Activated CD8-positive, alpha-beta T cell treated with anti-CD3 and anti-CD28 coated beads for 36 hours (primary cell): ENCODE measurements at regions of chr6 and their contacts with region 1.

Region 1: DNA sequence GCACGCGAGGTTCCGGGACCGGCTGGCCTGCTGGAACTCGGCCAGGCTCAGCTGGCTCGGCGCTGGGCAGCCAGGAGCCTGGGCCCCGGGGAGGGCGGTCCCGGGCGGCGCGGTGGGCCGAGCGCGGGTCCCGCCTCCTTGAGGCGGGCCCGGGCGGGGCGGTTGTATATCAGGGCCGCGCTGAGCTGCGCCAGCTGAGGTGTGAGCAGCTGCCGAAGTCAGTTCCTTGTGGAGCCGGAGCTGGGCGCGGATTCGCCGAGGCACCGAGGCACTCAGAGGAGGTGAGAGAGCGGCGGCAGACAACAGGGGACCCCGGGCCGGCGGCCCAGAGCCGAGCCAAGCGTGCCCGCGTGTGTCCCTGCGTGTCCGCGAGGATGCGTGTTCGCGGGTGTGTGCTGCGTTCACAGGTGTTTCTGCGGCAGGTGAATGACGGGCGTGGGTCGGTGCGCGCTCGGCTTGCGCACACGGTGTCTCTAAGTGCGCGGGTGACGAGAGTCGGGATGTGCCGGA is at the start of gene CDKN1A:
- DNase-seq: peak; percentile 84
- ATAC-seq: peak; percentile 62
- H3K4me3 Mint-ChIP-seq: peak within 1 kb of the TSS; percentile 91
- H3K27ac Mint-ChIP-seq: peak within 1 kb of the TSS; percentile 72
- H3K4me1 Mint-ChIP-seq: peaks cover 50% of the 10 kb centered on the region
- H3K27me3 Mint-ChIP-seq: peaks cover 4% of the 10 kb centered on the region
- CTCF ChIP-seq: no peak
- total RNA-seq, gene CDKN1A: 42.3 to 47.4 TPM

Region 2: GRCh38 chr6:36094753-36095496 is 583.6 kb before region 1 on chr6:
- CTCF ChIA-PET with region 1: no interaction called
- POLR2A ChIA-PET with region 1: no interaction called
- intact Hi-C with region 1: no loop called
- DNase-seq: peak; percentile 90
- ATAC-seq: peak; percentile 82
- H3K4me3 Mint-ChIP-seq: no peak overlapping the region
- H3K27ac Mint-ChIP-seq: peak overlapping the region; percentile 67
- H3K4me1 Mint-ChIP-seq: peaks cover 32% of the 10 kb centered on the region
- H3K27me3 Mint-ChIP-seq: no peaks in the 10 kb centered on the region
- CTCF ChIP-seq: peak; percentile 96

Region 3: GRCh38 chr6:36692220-36692619 is 13.6 kb after region 1 on chr6:
- CTCF ChIA-PET with region 1: interaction called, 15 read pairs
- POLR2A ChIA-PET with region 1: interaction called, 4 read pairs
- intact Hi-C with region 1: no loop called
- DNase-seq: peak; percentile 52
- ATAC-seq: peak; percentile 86
- H3K4me3 Mint-ChIP-seq: no peak overlapping the region
- H3K27ac Mint-ChIP-seq: no peak overlapping the region
- H3K4me1 Mint-ChIP-seq: peaks cover 22% of the 10 kb centered on the region
- H3K27me3 Mint-ChIP-seq: no peaks in the 10 kb centered on the region
- CTCF ChIP-seq: no peak